Left cardiac atrium (tissue), 4 donors: ENCODE measurements at regions of chr4 and their contacts with region 1.

Region 1: GRCh38 chr4:145557720-145558119 is 61.5 kb upstream of the MMAA start:
- DNase-seq: peak; percentile 36
- ATAC-seq: peak; percentile 71 to 83

Region 2: DNA sequence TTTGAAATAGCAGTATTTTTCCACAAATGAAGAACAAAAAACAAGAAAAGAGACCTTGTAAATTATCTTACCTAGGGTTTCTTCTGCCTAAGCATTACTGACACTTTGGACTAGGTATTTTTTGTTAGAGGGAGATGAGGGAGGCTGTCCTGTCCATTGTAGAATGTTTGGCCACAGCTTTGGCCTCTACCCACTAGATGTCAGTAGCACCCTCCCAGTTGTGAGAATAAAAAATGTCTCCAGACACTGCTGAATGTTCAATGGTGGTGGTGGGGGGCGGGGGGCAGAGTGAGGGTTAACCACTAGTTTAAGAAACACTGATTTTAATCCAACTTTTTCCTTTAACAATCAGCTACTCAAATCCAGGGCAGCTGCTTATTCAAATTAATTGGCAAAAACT is 403.1 kb before region 1 on chr4:
- intact Hi-C with region 1: loop called in 1 of 2 experiments (anchors 10 kb)
- DNase-seq: no peak
- ATAC-seq: peak; percentile 80 to 85

Region 3: GRCh38 chr4:145481164-145481941 is 76.4 kb before region 1 on chr4 and contains the start of gene SMAD1:
- intact Hi-C with region 1: loop called in 1 of 2 experiments (anchors 5 kb)
- DNase-seq: peak; percentile 88
- ATAC-seq: peak; percentile 96 to 98
- total RNA-seq, gene SMAD1: 9.8 to 10.6 TPM